ENCODE measurements at regions of chr9 and their contacts with region 1.

Region 1: DNA sequence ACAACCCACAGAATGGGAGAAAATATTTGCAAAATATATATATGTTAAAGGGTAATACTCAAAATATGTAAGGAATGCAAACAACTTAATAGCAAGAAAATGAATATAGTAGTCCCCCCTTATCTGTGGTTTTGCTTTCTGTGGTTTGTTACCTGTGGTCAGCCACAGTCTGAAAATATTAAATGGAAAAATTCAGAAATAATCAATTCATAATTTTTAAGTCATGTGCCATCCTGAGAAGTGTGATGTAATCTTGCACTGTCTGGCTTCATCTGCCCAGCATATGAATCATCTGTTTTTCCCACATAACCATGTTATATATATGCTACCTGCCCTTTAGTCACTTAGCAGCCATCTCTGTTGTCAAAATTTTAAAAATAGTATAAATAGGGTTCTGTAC is 11.7 kb downstream of the CER1 start:
- DNase-seq: no peak
- ATAC-seq: no peak
- H3K4me3 ChIP-seq: no peak overlapping the region
- H3K4me3 Mint-ChIP-seq: no peak overlapping the region
- H3K27ac ChIP-seq: no peak overlapping the region
- H3K27ac Mint-ChIP-seq: no peak overlapping the region
- H3K4me1 ChIP-seq: no peaks in the 10 kb centered on the region
- H3K4me1 Mint-ChIP-seq: no peaks in the 10 kb centered on the region
- H3K27me3 ChIP-seq: no peaks in the 10 kb centered on the region
- H3K27me3 Mint-ChIP-seq: peaks cover 25% of the 10 kb centered on the region
- CTCF ChIP-seq: no peak

Region 2: DNA sequence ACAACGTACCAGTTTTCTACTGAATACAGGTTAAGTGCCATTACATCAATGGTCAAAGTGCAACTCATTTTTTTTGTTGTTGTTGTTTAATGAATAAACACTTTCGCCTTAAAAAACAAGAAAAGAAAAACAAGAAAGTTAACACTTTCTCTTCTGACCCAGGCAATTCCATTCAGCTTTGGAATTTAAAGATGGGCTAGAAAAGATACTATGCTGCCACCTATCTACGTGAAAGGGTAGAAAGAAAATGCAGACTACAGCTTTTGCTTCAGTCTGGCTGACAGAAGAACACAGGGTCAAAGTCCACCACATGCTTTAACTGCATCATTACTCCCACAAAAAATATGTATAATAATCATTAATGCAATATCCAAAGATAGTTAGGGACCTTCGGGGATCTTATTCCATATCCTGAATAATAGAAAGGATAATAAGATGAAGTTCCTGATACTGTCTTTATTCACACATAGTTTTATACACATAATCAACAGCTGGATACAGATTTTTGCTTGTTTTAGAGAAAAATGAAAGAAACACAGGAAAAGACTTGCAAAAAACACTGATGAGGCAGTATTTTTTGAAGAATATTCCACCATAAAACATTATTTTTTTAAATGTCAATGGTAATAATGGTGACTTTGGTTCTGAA is 58.0 kb before region 1 on chr9:
- CTCF ChIA-PET with region 1: no interaction called
- POLR2A ChIA-PET with region 1: no interaction called
- intact Hi-C with region 1: loop called in 1 of 2 experiments (anchors 10 kb)
- DNase-seq: no peak
- ATAC-seq: no peak
- H3K4me3 ChIP-seq: no peak overlapping the region
- H3K4me3 Mint-ChIP-seq: no peak overlapping the region
- H3K27ac ChIP-seq: no peak overlapping the region
- H3K27ac Mint-ChIP-seq: no peak overlapping the region
- H3K4me1 ChIP-seq: no peaks in the 10 kb centered on the region
- H3K4me1 Mint-ChIP-seq: no peaks in the 10 kb centered on the region
- H3K27me3 ChIP-seq: no peaks in the 10 kb centered on the region
- H3K27me3 Mint-ChIP-seq: no peaks in the 10 kb centered on the region
- CTCF ChIP-seq: no peak

Region 3: DNA sequence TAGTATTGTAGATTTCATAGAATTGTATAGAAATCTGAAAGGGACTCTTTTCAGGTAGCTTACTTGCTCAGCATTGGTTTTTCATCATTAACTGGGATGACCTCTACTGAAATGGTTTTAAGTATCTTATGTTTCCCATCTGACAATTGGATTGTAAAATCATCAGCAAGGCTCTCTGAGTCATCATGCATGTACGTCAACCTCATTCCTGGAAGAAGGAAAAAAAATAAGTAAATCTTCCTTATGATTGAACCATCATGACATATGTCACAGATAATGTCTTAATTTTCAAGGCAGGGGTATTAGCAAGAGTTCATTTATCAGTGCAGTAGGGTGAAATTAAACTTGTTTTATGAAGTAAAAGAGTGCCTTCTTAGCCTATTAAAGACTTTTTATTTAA is 86.6 kb after region 1 on chr9:
- CTCF ChIA-PET with region 1: no interaction called
- POLR2A ChIA-PET with region 1: no interaction called
- intact Hi-C with region 1: no loop called
- DNase-seq: no peak
- ATAC-seq: no peak
- H3K4me3 ChIP-seq: no peak overlapping the region
- H3K4me3 Mint-ChIP-seq: no peak overlapping the region
- H3K27ac ChIP-seq: no peak overlapping the region
- H3K27ac Mint-ChIP-seq: no peak overlapping the region
- H3K4me1 ChIP-seq: no peaks in the 10 kb centered on the region
- H3K4me1 Mint-ChIP-seq: no peaks in the 10 kb centered on the region
- H3K27me3 ChIP-seq: no peaks in the 10 kb centered on the region
- H3K27me3 Mint-ChIP-seq: peaks cover 3% of the 10 kb centered on the region
- CTCF ChIP-seq: no peak

Region 4: GRCh38 chr9:15374336-15374735 is 663.5 kb after region 1 on chr9:
- CTCF ChIA-PET with region 1: no interaction called
- POLR2A ChIA-PET with region 1: no interaction called
- intact Hi-C with region 1: no loop called
- DNase-seq: no peak
- ATAC-seq: no peak
- H3K4me3 ChIP-seq: no peak overlapping the region
- H3K4me3 Mint-ChIP-seq: no peak overlapping the region
- H3K27ac ChIP-seq: no peak overlapping the region
- H3K27ac Mint-ChIP-seq: no peak overlapping the region
- H3K4me1 ChIP-seq: no peaks in the 10 kb centered on the region
- H3K4me1 Mint-ChIP-seq: peaks cover 4% of the 10 kb centered on the region
- H3K27me3 ChIP-seq: no peaks in the 10 kb centered on the region
- H3K27me3 Mint-ChIP-seq: peaks cover 3% of the 10 kb centered on the region
- CTCF ChIP-seq: no peak

Measured in CD8-positive, alpha-beta T cell (primary cell).